BJ (cell line): ENCODE measurements at regions of chr3 and their contacts with region 1.

Region 1: GRCh38 chr3:62462104-62462762 is 88.9 kb upstream of the FEZF2 start:
- DNase-seq: no peak
- H3K4me3 ChIP-seq: no peak overlapping the region
- H3K27me3 ChIP-seq: no peaks in the 10 kb centered on the region
- CTCF ChIP-seq: no peak

Region 2: DNA sequence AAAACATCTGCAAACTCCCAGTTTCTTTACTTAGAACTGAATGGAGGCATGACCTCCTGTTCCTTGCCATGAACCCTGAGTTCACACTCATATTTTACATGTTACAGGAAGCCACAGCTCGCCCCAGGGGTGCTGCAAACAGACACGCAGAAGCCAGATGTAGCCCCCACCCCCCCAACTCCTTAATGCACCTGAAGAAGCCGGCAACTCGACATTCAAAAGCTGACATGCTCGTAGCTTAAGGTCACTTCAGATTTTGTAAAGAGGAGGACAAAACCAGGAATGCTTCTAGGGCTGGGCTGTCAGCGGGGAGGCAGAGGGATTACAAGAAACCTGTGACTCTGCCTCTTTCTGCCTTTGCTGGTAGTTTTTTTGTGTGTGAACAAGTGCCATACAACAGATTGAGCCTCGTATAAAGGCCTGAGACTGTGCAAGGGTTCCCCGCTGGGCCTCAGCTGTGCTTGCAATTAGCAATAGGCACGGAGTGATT is 46.9 kb before region 1 on chr3:
- CTCF ChIA-PET with region 1: no interaction called
- POLR2A ChIA-PET with region 1: interaction called, 10 read pairs
- DNase-seq: no peak
- H3K4me3 ChIP-seq: no peak overlapping the region
- H3K27me3 ChIP-seq: no peaks in the 10 kb centered on the region
- CTCF ChIP-seq: no peak